ENCODE measurements at regions of chr4 and their contacts with region 1.

Region 1: GRCh38 chr4:101347557-101348366 is 436 bp upstream of the PPP3CA start:
- DNase-seq: peak; percentile 96
- H3K4me3 Mint-ChIP-seq: peak overlapping the region; percentile 87
- H3K27ac Mint-ChIP-seq: peak overlapping the region; percentile 72
- H3K4me1 Mint-ChIP-seq: peaks cover 31% of the 10 kb centered on the region
- H3K27me3 Mint-ChIP-seq: peaks cover 41% of the 10 kb centered on the region

Region 2: DNA sequence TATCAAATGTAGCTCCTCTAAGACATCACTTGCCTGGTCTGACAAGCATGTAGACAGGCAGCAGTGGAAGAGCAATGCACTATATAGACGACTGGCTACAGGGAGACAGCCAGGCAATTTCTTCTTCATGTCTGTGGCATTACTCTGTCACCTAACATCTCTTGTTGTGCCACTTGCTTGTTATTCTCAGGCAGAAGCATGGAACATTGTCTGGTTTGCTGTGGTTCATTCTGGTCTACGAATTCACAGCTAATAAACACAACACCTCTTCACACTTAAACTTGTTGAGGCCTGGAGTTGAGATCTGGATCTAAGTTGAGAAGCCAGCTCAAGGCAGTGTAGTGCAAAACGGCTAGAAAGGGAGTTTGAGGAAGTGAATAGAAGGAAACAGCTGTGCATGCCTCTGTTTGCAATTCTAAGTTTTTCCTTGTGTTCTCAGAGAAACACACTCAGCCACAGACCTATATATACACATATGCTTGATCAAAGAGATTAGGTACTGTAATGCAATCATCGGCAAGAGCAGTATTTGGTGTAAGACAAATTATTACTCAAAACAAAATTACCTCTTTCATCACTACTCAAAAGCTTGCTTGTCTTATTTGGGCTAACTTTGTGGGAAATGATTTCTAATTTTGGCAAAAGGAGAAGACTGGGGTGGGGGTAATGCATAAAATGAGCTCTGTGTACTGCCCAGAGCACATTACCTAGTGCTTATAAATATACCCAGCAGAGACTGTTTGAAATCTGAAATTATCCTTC is 244.2 kb before region 1 on chr4:
- intact Hi-C with region 1: loop called (anchors 1 kb)
- DNase-seq: no peak
- H3K4me3 Mint-ChIP-seq: peak overlapping the region; percentile 11
- H3K27ac Mint-ChIP-seq: peak overlapping the region; percentile 52
- H3K4me1 Mint-ChIP-seq: peaks cover 25% of the 10 kb centered on the region
- H3K27me3 Mint-ChIP-seq: no peaks in the 10 kb centered on the region

Region 3: GRCh38 chr4:101282076-101282844 is 65.5 kb before region 1 on chr4:
- intact Hi-C with region 1: loop called (anchors 2 kb)
- DNase-seq: no peak
- H3K4me3 Mint-ChIP-seq: no peak overlapping the region
- H3K27ac Mint-ChIP-seq: no peak overlapping the region
- H3K4me1 Mint-ChIP-seq: peaks cover 29% of the 10 kb centered on the region
- H3K27me3 Mint-ChIP-seq: peaks cover 2% of the 10 kb centered on the region

Region 4: DNA sequence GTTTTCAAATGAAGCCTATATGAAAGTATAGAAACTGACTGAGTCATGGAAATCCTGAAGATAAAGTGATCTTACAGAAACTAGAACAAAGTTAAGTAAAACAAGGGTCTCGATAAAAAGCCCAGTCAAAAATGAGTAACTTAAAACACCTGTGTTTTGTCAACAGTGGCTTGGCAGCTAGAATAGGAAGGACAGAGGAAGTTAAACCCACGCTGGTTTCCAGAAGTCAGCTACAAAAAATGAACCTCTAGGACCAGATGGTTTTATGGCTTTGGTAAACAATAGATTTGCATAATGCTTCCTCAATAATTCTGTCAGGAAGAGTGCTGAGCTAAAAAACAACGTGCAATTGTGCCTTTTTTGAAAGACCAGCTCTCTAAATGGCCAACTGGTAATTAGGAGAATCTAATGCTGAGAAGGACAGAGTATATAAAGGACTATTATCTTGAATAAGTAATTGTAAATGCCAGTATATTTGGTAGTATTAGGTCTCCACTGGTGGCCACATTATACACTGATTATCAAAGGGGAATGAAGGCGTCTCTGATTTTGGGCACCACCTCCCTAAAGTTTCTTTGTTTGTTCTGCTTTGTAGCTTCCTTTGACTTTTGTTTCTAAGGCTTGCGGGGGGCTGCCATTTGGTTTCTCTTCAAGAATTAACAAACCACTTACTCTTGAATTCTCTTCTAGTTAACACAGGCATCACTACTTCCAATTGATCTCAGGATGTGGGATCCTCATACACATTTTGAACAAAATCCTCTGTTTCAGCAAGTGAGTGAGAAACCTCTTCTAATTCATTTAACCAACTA is 71.8 kb after region 1 on chr4:
- intact Hi-C with region 1: loop called (anchors 1 kb)
- DNase-seq: no peak
- H3K4me3 Mint-ChIP-seq: peak overlapping the region; percentile 1
- H3K27ac Mint-ChIP-seq: peak overlapping the region; percentile 0
- H3K4me1 Mint-ChIP-seq: peaks cover 46% of the 10 kb centered on the region
- H3K27me3 Mint-ChIP-seq: peaks cover 17% of the 10 kb centered on the region

Region 5: GRCh38 chr4:101669138-101669831 is 321.5 kb after region 1 on chr4:
- intact Hi-C with region 1: no loop called
- DNase-seq: no peak
- H3K4me3 Mint-ChIP-seq: no peak overlapping the region
- H3K27ac Mint-ChIP-seq: no peak overlapping the region
- H3K4me1 Mint-ChIP-seq: no peaks in the 10 kb centered on the region
- H3K27me3 Mint-ChIP-seq: no peaks in the 10 kb centered on the region

Region 6: DNA sequence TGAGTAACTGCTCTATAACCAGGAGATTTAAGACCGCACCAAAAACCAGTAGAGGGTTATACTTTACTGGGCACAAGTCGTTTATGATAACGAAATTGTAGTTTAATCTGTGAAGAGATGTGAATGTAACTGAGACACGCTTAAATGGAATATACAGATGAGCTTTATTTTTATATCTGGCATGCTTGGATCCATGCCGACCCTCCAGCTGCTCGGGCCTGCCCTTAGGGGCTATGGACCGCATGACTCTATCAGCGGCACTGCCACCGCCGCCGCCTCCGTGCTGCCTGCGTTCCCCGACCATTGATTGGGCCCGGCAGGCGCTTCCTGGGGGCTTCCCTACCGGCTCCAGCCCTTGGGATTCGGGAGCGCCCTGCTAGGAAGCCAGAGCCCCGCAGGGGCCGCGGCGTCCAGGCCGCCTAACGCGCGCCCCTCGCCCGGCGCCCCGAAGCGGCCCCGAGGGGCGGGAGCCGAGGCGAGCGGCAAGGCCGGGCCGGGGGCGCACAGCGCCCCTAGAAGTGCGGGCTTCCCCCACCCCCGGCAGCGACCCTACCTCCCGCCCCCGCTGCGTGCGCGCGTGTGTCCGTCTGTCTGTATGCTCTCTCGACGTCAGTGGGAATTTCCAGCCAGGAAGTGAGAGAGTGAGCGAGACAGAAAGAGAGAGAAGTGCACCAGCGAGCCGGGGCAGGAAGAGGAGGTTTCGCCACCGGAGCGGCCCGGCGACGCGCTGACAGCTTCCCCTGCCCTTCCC is 1153.1 kb after region 1 on chr4 and contains the start of gene NFKB1:
- intact Hi-C with region 1: loop called (anchors 5 kb)
- DNase-seq: peak; percentile 74
- H3K4me3 Mint-ChIP-seq: peak within 1 kb of the TSS; percentile 96
- H3K27ac Mint-ChIP-seq: peak within 1 kb of the TSS; percentile 89
- H3K4me1 Mint-ChIP-seq: peaks cover 29% of the 10 kb centered on the region
- H3K27me3 Mint-ChIP-seq: no peaks in the 10 kb centered on the region
- total RNA-seq, gene NFKB1: 199 and 205 TPM in 2 replicates

Measured in activated T-helper 2 cell treated with anti-CD3 and anti-CD28 coated beads, Interferon-gamma antibody, Interleukin-2, Interleukin-4, amounts not matched to agents 10 μg/mL and 5 μg/mL and 100 μg/mL, durations not matched to agents 14 hours and 24 hours and 36 hours (primary cell).